Activated naive CD4-positive, alpha-beta T cell treated with anti-CD3 and anti-CD28 coated beads for 36 hours (primary cell): ENCODE measurements at regions of chr2 and their contacts with region 1.

Region 1: DNA sequence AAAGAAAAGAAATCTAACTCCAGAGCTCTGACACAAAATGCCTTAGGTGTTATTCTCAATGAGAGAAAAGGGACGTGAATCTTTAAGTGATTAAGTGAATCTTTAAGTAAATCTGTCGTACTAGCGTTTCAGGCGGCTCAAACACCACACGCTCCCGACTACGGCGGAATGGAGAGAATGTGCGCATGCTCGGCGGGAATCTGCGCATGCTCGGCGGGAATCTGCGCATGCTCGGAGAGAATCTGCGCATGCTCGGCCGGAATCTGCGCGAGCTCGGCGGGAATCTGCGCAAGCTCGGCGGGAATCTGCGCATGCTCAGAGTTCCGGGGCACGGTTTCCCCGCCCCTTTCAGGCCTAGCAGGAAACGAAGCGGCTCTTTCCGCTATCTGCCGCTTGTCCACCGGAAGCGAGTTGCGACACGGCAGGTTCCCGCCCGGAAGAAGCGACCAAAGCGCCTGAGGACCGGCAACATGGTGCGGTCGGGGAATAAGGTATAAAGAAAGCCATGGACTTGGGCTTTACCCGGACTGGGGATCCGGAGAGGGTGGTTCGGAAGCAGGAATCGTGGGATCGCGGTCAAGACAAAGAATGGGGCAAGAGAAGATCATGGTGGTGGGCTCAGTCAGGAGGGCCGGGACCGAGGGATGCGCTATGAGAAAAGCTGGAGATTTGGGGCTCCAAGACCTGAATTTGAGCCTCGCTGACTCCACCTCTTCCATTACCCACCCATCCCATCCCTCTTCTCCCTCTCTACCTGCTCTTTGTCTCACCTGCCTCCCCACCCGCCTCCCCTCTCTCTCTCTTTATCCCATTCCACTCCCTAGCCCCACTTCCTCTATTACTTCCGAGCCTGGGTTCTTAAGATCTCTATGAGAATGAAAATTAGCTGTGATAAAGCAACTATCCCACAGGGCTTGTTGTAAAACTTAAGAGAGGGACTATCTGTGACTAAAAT is at the start of gene XRCC5:
- DNase-seq: peak; percentile 99
- H3K4me3 Mint-ChIP-seq: peak within 1 kb of the TSS; percentile 100
- H3K27ac Mint-ChIP-seq: peak within 1 kb of the TSS; percentile 99
- H3K4me1 Mint-ChIP-seq: peaks cover 45% of the 10 kb centered on the region
- H3K27me3 Mint-ChIP-seq: no peaks in the 10 kb centered on the region
- total RNA-seq, gene XRCC5: 486 to 495 TPM

Region 2: DNA sequence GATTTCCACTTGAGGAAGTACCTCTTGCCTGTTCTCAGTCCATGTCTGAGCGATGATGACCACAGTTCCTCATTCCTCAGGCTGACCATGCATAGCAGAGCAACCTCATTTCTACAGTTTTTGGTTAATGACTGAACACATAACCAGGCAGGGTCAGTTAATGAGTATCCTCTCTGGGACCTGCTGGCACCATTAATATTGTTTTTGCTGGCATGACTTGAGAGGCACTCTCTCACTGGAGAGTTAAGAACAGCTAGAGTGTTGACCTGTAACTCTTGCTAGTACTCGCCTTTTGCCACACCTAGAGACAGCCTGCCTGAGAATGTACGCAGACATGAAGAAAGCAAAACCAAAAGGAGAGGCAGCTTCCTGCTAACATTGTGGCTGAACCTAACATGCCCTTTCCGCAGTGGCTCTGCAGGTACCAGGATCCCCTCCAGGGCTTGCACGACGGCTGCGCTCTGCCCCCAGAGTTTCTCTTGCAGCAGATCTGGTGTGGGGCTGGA is 51.5 kb before region 1 on chr2:
- CTCF ChIA-PET with region 1: interaction called, 3 read pairs
- intact Hi-C with region 1: loop called (anchors 1 kb)
- DNase-seq: peak; percentile 66
- H3K4me3 Mint-ChIP-seq: peak overlapping the region; percentile 65
- H3K27ac Mint-ChIP-seq: peak overlapping the region; percentile 81
- H3K4me1 Mint-ChIP-seq: peaks cover 24% of the 10 kb centered on the region
- H3K27me3 Mint-ChIP-seq: no peaks in the 10 kb centered on the region

Region 3: DNA sequence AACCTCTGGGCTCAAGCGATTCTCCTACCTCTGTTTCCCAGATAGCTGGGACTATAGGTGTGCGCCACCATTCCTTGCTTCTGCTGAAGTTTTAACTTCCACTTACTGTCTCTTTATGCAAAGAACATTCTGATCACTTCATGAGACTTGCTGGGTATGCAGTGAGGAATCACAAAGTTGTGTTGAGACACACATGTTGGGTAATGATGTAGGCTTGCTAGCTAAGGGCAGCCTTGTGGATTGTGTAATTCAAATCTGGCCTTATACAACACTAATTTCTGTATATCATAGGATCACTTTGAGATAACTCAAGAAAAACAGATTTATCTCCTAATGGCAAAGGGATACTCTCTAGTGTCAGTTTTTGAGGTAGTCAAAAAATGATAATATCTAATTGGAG is 24.2 kb after region 1 on chr2:
- CTCF ChIA-PET with region 1: interaction called, 6 read pairs
- intact Hi-C with region 1: loop called (anchors 1 kb)
- DNase-seq: no peak
- H3K4me3 Mint-ChIP-seq: no peak overlapping the region
- H3K27ac Mint-ChIP-seq: peak overlapping the region; percentile 80
- H3K4me1 Mint-ChIP-seq: peaks cover 61% of the 10 kb centered on the region
- H3K27me3 Mint-ChIP-seq: no peaks in the 10 kb centered on the region

Region 4: DNA sequence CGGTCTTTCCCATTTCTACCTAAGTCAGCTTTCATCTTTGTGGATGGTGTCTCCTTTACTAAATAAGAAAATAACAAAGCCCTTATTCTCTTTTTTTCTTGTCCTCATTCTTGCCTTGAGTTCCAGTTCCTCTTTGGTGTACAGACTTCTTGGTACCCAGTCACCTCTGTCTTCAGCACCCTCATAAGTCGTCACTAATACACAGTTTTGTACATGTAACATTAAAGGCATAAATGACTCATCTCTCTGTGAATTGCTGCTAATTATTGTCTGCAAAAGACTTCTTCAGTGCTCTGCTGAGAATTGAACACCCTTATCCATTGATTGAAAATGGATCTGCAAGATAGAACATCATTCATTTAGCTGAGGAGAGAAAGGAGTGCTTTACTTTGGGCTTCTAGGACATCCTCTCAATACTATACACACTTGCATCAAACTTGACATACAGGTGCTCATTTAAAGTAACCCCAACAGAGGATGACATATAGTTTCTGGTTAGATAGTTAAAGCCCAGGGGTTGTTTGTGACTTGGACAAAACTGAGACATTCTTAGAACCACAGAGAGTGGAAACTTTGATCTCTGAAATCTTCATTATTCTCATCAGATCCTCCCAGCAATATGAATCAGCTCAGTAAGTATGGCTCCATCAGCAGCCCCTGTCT is 96.9 kb after region 1 on chr2:
- CTCF ChIA-PET with region 1: no interaction called
- intact Hi-C with region 1: loop called (anchors 1 kb)
- DNase-seq: no peak
- H3K4me3 Mint-ChIP-seq: no peak overlapping the region
- H3K27ac Mint-ChIP-seq: peak overlapping the region; percentile 93
- H3K4me1 Mint-ChIP-seq: peaks cover 77% of the 10 kb centered on the region
- H3K27me3 Mint-ChIP-seq: no peaks in the 10 kb centered on the region

Region 5: GRCh38 chr2:216412022-216412999 is 303.1 kb after region 1 on chr2 and contains the start of gene SMARCAL1:
- CTCF ChIA-PET with region 1: interaction called, 7 read pairs
- intact Hi-C with region 1: loop called (anchors 1 kb)
- DNase-seq: peak; percentile 100
- H3K4me3 Mint-ChIP-seq: peak within 1 kb of the TSS; percentile 92
- H3K27ac Mint-ChIP-seq: peak within 1 kb of the TSS; percentile 90
- H3K4me1 Mint-ChIP-seq: peaks cover 6% of the 10 kb centered on the region
- H3K27me3 Mint-ChIP-seq: no peaks in the 10 kb centered on the region
- total RNA-seq, gene SMARCAL1: 17.0 to 18.2 TPM

Region 6: DNA sequence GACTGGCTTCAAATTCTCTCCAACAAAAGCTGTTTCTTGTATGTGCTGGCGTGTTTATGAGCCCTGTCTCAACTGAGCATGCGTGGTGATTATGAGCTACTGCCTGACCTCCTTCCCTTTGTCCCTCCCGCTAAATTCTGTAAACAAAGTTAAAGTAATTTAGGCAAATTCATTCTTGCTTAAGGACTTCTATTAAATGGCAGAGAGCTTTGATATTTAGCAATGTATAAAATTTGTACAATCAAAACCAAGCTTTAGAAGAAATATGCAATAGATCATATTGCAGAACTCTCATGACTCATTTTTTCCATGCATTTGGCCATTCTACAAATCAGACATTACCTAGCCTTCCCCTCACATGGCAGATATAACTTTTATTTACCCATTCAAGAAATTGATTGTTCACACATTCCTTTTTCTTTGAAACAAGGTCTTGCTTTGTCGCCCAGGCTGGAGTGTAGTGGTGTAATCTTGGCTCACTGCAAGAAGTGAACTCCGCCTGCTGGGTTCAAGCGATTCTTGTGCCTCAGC is 542.2 kb after region 1 on chr2:
- CTCF ChIA-PET with region 1: no interaction called
- intact Hi-C with region 1: no loop called
- DNase-seq: no peak
- H3K4me3 Mint-ChIP-seq: no peak overlapping the region
- H3K27ac Mint-ChIP-seq: no peak overlapping the region
- H3K4me1 Mint-ChIP-seq: no peaks in the 10 kb centered on the region
- H3K27me3 Mint-ChIP-seq: no peaks in the 10 kb centered on the region

Region 7: GRCh38 chr2:216666461-216667233 is 557.4 kb after region 1 on chr2:
- CTCF ChIA-PET with region 1: no interaction called
- intact Hi-C with region 1: loop called (anchors 1 kb)
- DNase-seq: peak; percentile 83
- H3K4me3 Mint-ChIP-seq: no peak overlapping the region
- H3K27ac Mint-ChIP-seq: no peak overlapping the region
- H3K4me1 Mint-ChIP-seq: no peaks in the 10 kb centered on the region
- H3K27me3 Mint-ChIP-seq: peaks cover 3% of the 10 kb centered on the region

Region 8: DNA sequence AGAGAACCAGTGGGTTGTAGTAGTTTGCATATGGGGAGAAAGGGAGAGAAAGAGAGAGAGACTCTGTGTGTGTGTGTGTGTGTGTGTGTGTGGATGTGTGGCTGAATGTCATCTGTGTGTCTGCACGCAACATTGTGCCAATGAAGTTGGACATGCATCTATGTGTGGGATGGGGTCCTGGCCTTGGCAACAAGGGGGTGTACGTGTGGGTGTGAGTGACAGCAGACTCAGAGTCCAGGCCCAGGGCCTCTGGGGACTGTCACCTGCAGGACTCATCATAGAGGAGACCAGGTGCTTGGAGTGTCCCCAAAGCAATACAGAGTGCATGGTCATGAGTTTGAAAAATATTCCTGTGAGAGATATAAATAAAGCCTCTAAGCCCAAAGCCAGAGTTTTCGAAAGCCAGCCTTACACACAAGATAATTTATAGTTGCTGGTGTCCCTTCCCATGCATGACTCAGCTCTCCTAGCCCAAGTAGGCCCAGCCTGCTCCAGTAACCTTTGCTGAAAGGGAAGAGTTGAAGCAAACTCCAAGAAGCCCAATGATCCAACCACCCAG is 690.7 kb after region 1 on chr2:
- CTCF ChIA-PET with region 1: no interaction called
- intact Hi-C with region 1: no loop called
- DNase-seq: no peak
- H3K4me3 Mint-ChIP-seq: no peak overlapping the region
- H3K27ac Mint-ChIP-seq: no peak overlapping the region
- H3K4me1 Mint-ChIP-seq: no peaks in the 10 kb centered on the region
- H3K27me3 Mint-ChIP-seq: no peaks in the 10 kb centered on the region